HCT116 (cell line): ENCODE measurements at regions of chr7 and their contacts with region 1.

Region 1: GRCh38 chr7:16645593-16646471 is at the starts of genes ANKMY2 and BZW2:
- DNase-seq: peak; percentile 90
- ATAC-seq: peak; percentile 88
- H3K4me3 ChIP-seq: peak within 1 kb of the TSS; percentile 85 to 90
- H3K27ac ChIP-seq: peak within 1 kb of the TSS; percentile 89
- H3K4me1 ChIP-seq: peaks cover 28% of the 10 kb centered on the region in 2 experiments; a peak in 3 of 4 replicates
- H3K27me3 ChIP-seq: no peaks in the 10 kb centered on the region
- CTCF ChIP-seq: no peak
- POLR2A ChIP-seq: peak; percentile 88
- RAD21 ChIP-seq: no peak
- total RNA-seq, gene ANKMY2: 24.9 TPM
- total RNA-seq, gene BZW2: 119 TPM

Region 2: DNA sequence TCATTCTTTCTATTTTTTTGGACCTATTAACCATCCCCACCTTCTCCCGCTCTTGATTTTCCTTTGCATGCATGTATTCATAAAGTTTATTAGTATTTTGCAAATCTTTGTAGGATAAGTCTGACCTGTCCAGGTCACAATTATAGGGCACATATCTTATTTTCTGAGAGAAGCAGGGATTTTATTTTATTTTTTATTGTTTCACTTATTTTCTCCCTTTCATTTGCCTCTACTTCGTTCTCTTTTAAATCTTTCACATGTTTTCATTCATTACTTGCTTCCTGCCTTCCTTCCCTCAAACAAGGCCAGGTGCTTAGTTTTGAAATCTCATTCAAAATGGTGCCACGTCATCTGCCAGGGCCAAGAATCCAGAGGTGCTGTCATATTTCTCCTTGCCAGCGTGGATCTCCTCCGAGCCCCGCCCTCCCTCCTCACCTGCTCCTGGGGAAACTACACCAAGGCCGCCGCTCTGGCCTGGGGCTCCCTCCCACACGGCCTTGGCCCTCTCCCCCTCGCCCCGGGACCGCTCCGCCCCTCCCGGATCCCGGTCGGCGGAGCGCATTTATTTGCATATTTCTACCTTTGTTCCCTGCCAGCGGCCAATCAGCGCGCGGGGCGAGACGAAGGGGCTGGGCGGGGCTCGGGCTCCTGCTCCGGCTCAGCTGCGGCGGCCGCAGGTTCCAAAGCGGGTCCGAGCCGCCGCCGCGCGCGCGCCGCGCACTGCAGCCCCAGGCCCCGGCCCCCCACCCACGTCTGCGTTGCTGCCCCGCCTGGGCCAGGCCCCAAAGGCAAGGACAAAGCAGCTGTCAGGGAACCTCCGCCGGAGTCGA is 107.5 kb after region 1 on chr7 and contains the start of gene TSPAN13:
- CTCF ChIA-PET with region 1: no interaction called
- POLR2A ChIA-PET with region 1: no interaction called
- RAD21 ChIA-PET with region 1: no interaction called
- intact Hi-C with region 1: loop called (anchors 5 kb)
- DNase-seq: peak; percentile 86
- ATAC-seq: peak; percentile 96
- H3K4me3 ChIP-seq: peak within 1 kb of the TSS; percentile 75 to 80
- H3K27ac ChIP-seq: peak within 1 kb of the TSS; percentile 25
- H3K4me1 ChIP-seq: peaks cover 8 to 15% of the 10 kb centered on the region in 2 experiments; a peak in 3 of 4 replicates
- H3K27me3 ChIP-seq: no peaks in the 10 kb centered on the region
- CTCF ChIP-seq: no peak
- POLR2A ChIP-seq: peak; percentile 43
- RAD21 ChIP-seq: no peak
- total RNA-seq, gene TSPAN13: 18.5 TPM

Region 3: DNA sequence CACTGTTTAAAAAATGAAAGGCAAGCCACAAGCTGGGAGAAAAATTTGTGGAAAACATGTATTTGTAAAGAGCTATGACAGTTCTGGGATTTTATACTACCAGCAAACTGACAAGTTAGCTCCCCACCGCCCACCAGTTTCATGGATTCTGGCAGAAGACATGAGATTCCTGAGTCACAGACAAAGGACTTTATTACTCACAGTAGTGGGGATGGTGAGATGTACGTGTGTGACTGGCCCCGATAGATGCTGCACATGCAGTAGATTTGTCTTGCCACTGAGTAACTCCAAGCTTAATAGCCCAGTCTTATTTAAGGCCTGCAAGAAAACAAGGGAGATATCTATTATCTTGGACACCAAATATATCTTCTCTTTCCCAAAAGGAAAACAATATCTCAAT is 934.3 kb after region 1 on chr7:
- CTCF ChIA-PET with region 1: no interaction called
- POLR2A ChIA-PET with region 1: no interaction called
- RAD21 ChIA-PET with region 1: no interaction called
- intact Hi-C with region 1: no loop called
- DNase-seq: no peak
- ATAC-seq: no peak
- H3K4me3 ChIP-seq: no peak overlapping the region
- H3K27ac ChIP-seq: no peak overlapping the region
- H3K4me1 ChIP-seq: no peaks in the 10 kb centered on the region
- H3K27me3 ChIP-seq: no peaks in the 10 kb centered on the region
- CTCF ChIP-seq: no peak
- POLR2A ChIP-seq: no peak
- RAD21 ChIP-seq: no peak